Endothelial cell of umbilical vein (primary cell): ENCODE measurements at regions of chr16 and their contacts with region 1.

Region 1: GRCh38 chr16:57316390-57317017 is 32.0 kb upstream of the PLLP start:
- DNase-seq: peak; percentile 98
- H3K4me3 ChIP-seq: no peak overlapping the region
- H3K27ac ChIP-seq: peak overlapping the region; percentile 85
- H3K4me1 ChIP-seq: peaks cover 33% of the 10 kb centered on the region
- H3K27me3 ChIP-seq: no peaks in the 10 kb centered on the region
- CTCF ChIP-seq: no peak
- POLR2A ChIP-seq: peak; percentile 47

Region 2: DNA sequence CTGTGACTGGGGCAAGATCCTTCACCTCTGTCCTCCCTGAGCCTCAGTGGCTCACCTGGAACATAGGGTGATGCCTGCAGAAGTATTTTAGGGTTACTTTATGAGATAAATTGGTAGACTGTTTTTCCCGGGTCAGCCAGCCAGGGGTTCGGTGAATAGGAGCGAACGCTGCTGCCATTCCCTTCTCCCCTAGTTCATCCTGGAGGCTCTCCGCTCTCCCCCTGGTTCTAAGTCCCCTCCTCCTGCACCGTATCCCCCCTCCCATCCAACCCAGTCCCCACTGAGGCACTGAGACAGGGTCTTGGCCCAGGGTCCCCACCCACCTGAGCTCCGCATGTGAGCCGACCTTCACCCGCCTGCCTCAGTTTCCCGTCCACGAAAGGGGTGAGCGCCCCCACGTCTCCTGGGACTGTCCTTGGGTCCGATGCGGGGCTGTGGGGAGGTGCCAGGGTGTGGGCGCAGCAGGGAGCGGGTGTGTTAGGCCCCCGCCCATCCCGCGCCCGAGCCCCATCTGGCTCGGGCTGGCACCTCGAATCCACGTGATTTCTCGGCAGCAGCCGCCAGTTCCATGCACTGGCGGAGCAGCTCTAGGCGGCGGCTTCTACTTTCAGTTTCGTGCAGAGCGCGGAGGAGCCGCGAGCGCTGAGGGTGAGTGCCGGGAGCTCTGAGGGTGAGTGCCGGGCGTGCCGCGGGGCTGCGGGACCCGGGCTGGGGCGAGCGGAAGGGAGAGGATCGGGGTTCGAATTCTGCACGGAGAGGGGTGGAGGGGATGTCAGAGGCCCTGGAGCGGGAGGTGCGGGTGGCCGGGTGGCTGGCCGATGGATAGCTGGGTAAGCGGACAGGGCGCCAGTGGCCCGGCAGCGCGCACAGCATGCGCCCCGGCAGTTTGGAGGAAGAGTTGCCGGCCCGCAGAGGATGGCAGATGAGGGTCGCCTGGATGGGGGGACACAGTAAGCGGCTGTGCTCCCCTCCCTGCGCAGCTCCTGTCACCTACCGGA is 327.3 kb before region 1 on chr16 and contains the start of gene NLRC5:
- CTCF ChIA-PET with region 1: no interaction called
- POLR2A ChIA-PET with region 1: no interaction called
- dilution Hi-C with region 1: no loop called
- intact Hi-C with region 1: no loop called
- DNase-seq: peak; percentile 82
- H3K4me3 ChIP-seq: peak within 1 kb of the TSS; percentile 80 to 96 (median 86)
- H3K27ac ChIP-seq: peak within 1 kb of the TSS; percentile 58
- H3K4me1 ChIP-seq: peaks cover 17% of the 10 kb centered on the region
- H3K27me3 ChIP-seq: no peaks in the 10 kb centered on the region
- CTCF ChIP-seq: no peak
- POLR2A ChIP-seq: peak; percentile 44
- total RNA-seq, gene NLRC5: 20.1 and 26.3 TPM in 2 replicates

Region 3: GRCh38 chr16:57335366-57335765 is 18.9 kb after region 1 on chr16:
- CTCF ChIA-PET with region 1: interaction called, 4 read pairs
- POLR2A ChIA-PET with region 1: no interaction called
- dilution Hi-C with region 1: no loop called
- intact Hi-C with region 1: loop called (anchors 1 kb)
- DNase-seq: peak; percentile 74
- H3K4me3 ChIP-seq: no peak overlapping the region
- H3K27ac ChIP-seq: peak overlapping the region; percentile 59
- H3K4me1 ChIP-seq: peaks cover 10% of the 10 kb centered on the region
- H3K27me3 ChIP-seq: peaks cover 2% of the 10 kb centered on the region in 2 experiments
- CTCF ChIP-seq: no peak
- POLR2A ChIP-seq: no peak

Region 4: DNA sequence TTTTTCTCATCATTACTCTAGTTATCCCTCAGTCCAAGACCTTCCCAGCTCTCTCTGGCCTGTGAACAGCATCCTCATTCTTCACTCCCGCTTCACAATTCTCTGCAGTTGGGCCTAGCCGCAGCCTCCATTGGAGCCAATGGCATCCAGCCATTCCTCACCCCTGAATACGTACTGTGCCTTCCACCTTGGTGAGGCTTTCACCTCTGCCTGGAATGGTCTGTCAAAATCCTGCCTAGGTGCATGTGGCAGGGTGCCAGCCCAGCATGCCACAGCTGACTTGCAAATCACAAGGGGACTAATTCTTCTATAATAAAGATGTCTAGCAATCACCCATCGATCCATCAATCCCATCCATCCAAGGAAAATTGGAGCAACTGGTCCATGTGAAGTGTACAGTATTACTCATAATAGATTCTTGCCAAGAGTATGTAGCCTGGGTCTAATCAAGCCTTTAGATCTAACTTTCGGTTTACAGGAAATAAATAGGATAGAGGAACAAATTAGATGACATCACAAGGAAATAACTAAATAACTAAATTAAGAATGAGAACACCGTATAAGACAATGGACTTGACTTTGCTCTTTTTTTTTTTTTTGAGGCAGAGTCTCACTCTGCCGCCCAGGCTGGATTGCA is 50.7 kb after region 1 on chr16:
- CTCF ChIA-PET with region 1: interaction called, 4 read pairs
- POLR2A ChIA-PET with region 1: no interaction called
- dilution Hi-C with region 1: no loop called
- intact Hi-C with region 1: loop called (anchors 1 kb)
- DNase-seq: peak; percentile 58
- H3K4me3 ChIP-seq: no peak overlapping the region
- H3K27ac ChIP-seq: no peak overlapping the region
- H3K4me1 ChIP-seq: peaks cover 19% of the 10 kb centered on the region
- H3K27me3 ChIP-seq: no peaks in the 10 kb centered on the region
- CTCF ChIP-seq: no peak
- POLR2A ChIP-seq: no peak

Region 5: DNA sequence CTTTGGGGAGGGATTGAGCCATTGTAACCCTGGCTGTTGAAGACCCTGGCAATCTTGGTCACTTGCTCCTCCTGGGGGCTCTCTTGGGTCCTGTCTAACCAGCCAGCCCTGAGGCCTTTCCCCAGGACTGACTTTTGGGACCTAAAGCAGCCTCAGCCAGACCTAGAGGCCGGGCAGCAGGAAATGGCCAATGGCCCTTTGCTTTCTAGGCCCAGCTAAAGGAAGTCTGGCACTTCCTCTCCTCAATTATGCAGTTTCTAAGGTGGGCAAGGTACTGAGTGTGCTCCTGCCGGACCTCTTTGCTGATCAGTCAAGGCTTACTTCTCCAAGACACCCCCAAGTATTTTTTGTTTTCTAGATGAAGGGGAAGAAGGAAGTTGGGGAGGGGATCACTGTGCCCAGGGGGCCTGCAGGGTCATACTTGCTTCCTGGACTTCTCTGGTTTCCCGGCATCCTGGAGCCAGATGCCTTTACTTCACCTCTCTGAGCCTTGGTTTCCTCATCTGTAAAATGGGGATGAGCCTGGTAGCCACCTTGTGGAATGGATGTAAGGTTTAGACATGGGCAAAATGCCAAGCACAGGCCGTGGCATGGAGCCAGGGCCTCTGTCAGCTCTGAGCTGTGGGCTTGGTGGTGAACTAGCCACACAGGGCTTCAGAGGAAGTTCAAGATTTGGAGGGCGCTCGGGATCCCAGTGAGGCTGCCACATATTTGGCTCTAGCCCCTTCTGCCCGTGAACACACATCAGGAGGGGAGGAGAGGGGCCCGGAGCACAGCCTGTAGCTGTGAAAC is 64.4 kb after region 1 on chr16:
- CTCF ChIA-PET with region 1: interaction called, 4 read pairs
- POLR2A ChIA-PET with region 1: no interaction called
- dilution Hi-C with region 1: no loop called
- intact Hi-C with region 1: loop called (anchors 2 kb)
- DNase-seq: peak; percentile 68
- H3K4me3 ChIP-seq: no peak overlapping the region
- H3K27ac ChIP-seq: no peak overlapping the region
- H3K4me1 ChIP-seq: peaks cover 12% of the 10 kb centered on the region
- H3K27me3 ChIP-seq: no peaks in the 10 kb centered on the region
- CTCF ChIP-seq: no peak
- POLR2A ChIP-seq: no peak

Region 6: DNA sequence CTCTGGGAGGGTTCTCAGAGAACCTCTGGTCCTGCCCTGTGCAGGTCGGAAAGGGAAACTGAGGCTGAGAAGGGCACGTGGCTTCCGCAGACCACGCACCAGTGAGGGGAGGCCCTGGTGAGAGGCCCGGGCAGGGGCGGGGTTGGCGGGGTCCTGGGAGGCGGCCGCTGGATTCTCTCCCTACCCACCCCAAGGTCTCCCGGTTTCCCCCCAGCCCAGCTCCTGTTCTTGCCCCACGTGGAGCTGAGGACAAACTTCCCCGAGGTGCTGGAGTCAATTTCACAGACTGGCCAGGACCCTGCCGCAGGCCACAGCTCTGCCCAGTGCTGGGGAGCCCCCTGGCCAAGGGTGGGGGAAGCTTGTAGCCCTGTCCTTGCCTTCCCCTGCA is 99.6 kb after region 1 on chr16:
- CTCF ChIA-PET with region 1: interaction called, 507 read pairs
- POLR2A ChIA-PET with region 1: no interaction called
- dilution Hi-C with region 1: loop called (anchors 25 kb)
- intact Hi-C with region 1: loop called (anchors 1 kb)
- DNase-seq: no peak
- H3K4me3 ChIP-seq: no peak overlapping the region
- H3K27ac ChIP-seq: no peak overlapping the region
- H3K4me1 ChIP-seq: peaks cover 7% of the 10 kb centered on the region
- H3K27me3 ChIP-seq: no peaks in the 10 kb centered on the region
- CTCF ChIP-seq: no peak
- POLR2A ChIP-seq: no peak

Region 7: DNA sequence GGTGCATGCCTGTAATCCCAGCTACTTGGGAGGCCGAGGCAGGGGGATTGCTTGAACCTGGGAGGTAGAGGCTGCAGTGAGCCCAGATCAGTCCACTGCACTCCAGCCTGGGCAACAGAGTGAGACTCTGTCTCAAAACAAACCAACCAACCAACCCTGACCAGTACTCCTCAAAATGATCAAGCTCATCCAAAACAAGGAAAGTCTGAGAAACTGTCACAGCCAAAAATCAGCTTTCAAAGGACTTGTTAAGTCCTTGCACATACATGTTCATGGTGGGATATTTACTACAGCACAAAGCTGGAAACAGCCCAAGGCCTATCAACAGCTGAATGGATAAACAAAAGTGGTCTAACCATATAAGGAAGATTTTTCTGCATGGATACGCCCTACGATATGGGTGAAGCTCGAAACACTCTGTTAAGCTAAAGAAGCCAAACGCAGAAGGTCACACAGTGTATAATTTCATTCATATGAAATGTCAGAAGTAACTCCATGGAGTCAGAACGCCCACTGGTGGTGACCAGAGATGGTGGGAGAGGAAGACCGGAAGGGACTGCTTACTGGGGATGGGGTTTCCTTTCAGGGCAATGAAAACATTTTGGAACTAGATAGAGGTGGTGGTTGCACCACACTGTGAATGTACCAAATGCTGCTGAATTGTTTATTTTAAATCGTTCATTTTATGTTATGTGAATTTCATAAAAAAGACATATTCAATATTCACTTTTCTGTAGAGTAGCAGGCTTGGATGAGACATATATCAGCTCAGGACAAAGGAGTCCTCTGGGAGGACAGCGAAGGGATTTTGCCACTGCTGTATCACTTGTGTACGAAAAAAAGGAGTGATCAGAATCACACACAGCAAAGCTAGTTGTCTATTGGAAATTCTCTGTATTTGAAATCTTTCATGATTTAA is 105.8 kb after region 1 on chr16:
- CTCF ChIA-PET with region 1: interaction called, 507 read pairs
- POLR2A ChIA-PET with region 1: no interaction called
- dilution Hi-C with region 1: loop called (anchors 25 kb)
- intact Hi-C with region 1: loop called (anchors 1 kb)
- DNase-seq: peak; percentile 67
- H3K4me3 ChIP-seq: no peak overlapping the region
- H3K27ac ChIP-seq: no peak overlapping the region
- H3K4me1 ChIP-seq: peaks cover 5% of the 10 kb centered on the region
- H3K27me3 ChIP-seq: no peaks in the 10 kb centered on the region
- CTCF ChIP-seq: peak; percentile 68 to 72
- POLR2A ChIP-seq: no peak

Region 8: DNA sequence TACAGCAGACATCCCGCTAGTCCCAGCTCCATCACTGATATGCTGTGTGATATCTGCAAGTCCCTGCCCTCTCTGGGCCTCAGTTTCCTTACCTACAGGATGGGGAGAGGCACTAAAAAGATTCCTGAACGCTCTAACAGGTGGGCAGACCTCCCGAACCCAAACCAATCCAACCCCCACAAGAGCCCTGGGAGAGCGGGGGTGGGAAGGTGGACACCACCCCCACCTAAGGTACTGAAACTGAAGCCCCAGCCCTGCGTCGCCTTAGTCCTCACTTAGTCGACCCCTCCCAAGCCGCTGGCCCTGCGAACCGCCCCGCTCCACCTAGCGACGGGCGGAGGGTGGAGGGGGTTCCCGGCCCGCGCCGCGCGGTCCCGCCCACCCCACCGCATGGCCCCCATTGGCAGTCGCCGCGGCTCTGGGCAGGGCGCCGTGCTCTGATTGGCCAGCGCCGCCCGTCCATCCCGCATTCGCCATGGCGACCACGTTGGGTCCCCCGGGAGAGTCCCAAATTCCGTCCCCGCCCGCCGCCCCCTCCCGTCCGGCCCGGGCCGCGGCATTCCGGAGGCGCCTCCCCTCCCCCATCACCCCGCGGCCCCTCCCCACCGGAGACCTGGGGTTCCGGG is 219.3 kb after region 1 on chr16:
- CTCF ChIA-PET with region 1: no interaction called
- POLR2A ChIA-PET with region 1: no interaction called
- dilution Hi-C with region 1: no loop called
- intact Hi-C with region 1: no loop called
- DNase-seq: peak; percentile 87
- H3K4me3 ChIP-seq: peak overlapping the region; percentile 80 to 82 (median 80)
- H3K27ac ChIP-seq: peak overlapping the region; percentile 18
- H3K4me1 ChIP-seq: peaks cover 25% of the 10 kb centered on the region
- H3K27me3 ChIP-seq: peaks cover 3 to 24% of the 10 kb centered on the region in 2 experiments
- CTCF ChIP-seq: peak in 1 of 2 donors; percentile 16
- POLR2A ChIP-seq: no peak